Gastrocnemius medialis (tissue), 4 donors: ENCODE measurements at regions of chr17 and their contacts with region 1.

Region 1: GRCh38 chr17:70168977-70169708 is at the start of gene KCNJ2:
- DNase-seq: peak; percentile 84 to 89
- ATAC-seq: peak; percentile 72 to 80
- H3K4me3 ChIP-seq: peak within 1 kb of the TSS; percentile 82 to 90 (median 87)
- H3K27ac ChIP-seq: peak within 1 kb of the TSS; percentile 92 to 97 (median 96)
- H3K4me1 ChIP-seq: peaks cover 40% of the 10 kb centered on the region in 2 donors
- H3K27me3 ChIP-seq: no peaks in the 10 kb centered on the region
- CTCF ChIP-seq: peak in 1 of 5 experiments; percentile 30
- POLR2A ChIP-seq: peak; percentile 99
- total RNA-seq, gene KCNJ2: 7.3 to 18.9 (median 10.6) TPM

Region 2: GRCh38 chr17:69327060-69327831 is 841.9 kb before region 1 on chr17 and contains the start of gene ABCA5:
- in situ Hi-C with region 1: loop called in 1 of 4 experiments (anchors 25 kb)
- intact Hi-C with region 1: no loop called
- DNase-seq: peak; percentile 74 to 91
- ATAC-seq: peak; percentile 86
- H3K4me3 ChIP-seq: peak within 1 kb of the TSS; percentile 79 to 94 (median 90)
- H3K27ac ChIP-seq: peak within 1 kb of the TSS; percentile 91 to 98 (median 97)
- H3K4me1 ChIP-seq: peaks cover 25 to 34% of the 10 kb centered on the region in 2 donors
- H3K27me3 ChIP-seq: no peaks in the 10 kb centered on the region
- CTCF ChIP-seq: peak in 2 of 5 experiments; percentile 3
- POLR2A ChIP-seq: peak; percentile 97 to 99
- total RNA-seq, gene ABCA5: 62.8 to 228 (median 123) TPM

Region 3: DNA sequence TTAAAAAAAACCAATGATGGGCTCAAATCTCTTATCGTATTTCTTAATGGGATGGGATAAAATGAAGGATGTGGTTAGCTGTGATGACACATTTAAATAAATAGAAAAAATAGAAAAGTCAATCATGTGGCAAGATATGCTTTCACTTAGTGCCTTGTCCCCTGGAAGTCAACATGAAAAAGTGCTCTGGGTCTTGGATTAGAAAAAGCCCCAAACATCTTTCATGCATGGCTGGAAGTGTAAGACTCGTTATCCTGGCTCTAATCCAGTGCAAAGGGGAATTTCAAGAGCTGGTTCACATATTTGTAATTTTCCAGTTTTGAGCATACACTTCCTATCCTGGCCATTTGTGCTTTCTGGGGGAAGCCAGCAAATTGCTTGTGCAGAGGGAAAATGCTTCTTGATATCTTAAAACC is 593.8 kb before region 1 on chr17:
- in situ Hi-C with region 1: loop called in 3 of 4 experiments (anchors 25 kb)
- intact Hi-C with region 1: no loop called
- DNase-seq: no peak
- ATAC-seq: peak; percentile 13 to 23
- H3K4me3 ChIP-seq: no peak overlapping the region
- H3K27ac ChIP-seq: peak overlapping the region in 1 of 4 donors; percentile 56
- H3K4me1 ChIP-seq: peaks cover 0 to 12% of the 10 kb centered on the region in 2 donors
- H3K27me3 ChIP-seq: no peaks in the 10 kb centered on the region
- CTCF ChIP-seq: no peak
- POLR2A ChIP-seq: no peak

Region 4: DNA sequence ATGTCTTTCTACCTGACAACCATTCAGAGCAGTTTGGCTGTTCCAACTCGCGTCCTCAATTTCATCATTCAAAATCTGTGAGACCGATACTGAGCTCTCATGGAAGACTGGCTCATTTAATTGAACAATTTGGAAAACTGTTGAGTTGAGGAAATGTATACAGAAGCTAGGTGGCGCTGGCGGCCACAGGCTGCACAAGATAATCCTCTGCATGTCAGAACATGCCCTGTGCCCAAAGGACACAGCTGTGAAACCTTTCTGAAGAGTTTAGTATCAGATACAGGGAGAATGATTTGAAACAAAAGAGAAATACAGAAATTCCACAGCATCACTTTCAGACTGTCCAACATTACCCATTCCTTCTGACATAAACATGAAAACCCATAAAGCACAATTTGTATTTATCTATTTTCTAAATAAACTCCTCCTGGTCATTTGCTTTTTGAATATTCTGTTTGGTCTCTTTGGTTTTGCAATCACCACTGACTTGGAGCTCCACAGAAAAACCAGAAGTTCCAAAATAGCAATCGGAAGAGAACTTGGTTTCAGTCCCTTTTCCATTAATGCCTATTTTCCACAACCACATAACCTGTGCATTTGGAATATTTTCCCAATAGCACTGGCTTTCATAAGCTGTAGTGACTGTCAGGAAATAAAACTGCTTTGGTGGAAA is 561.8 kb before region 1 on chr17:
- in situ Hi-C with region 1: no loop called
- intact Hi-C with region 1: loop called (anchors 2 kb)
- DNase-seq: peak; percentile 55 to 75
- ATAC-seq: peak; percentile 60 to 88
- H3K4me3 ChIP-seq: no peak overlapping the region
- H3K27ac ChIP-seq: peak overlapping the region; percentile 69 to 80 (median 72)
- H3K4me1 ChIP-seq: peaks cover 27 to 35% of the 10 kb centered on the region in 2 donors
- H3K27me3 ChIP-seq: no peaks in the 10 kb centered on the region
- CTCF ChIP-seq: peak; percentile 78 to 94 (median 86)
- POLR2A ChIP-seq: no peak

Region 5: GRCh38 chr17:70137451-70138230 is 31.5 kb before region 1 on chr17:
- in situ Hi-C with region 1: no loop called
- intact Hi-C with region 1: loop called (anchors 1 kb)
- DNase-seq: peak; percentile 89 to 94
- ATAC-seq: peak; percentile 97
- H3K4me3 ChIP-seq: peak overlapping the region; percentile 51 to 59 (median 54)
- H3K27ac ChIP-seq: peak overlapping the region; percentile 91 to 98 (median 93)
- H3K4me1 ChIP-seq: peaks cover 19 to 23% of the 10 kb centered on the region in 2 donors
- H3K27me3 ChIP-seq: no peaks in the 10 kb centered on the region
- CTCF ChIP-seq: no peak
- POLR2A ChIP-seq: peak; percentile 63 to 88

Region 6: GRCh38 chr17:70313057-70313852 is 144.1 kb after region 1 on chr17:
- in situ Hi-C with region 1: no loop called
- intact Hi-C with region 1: loop called (anchors 10 kb)
- DNase-seq: no peak
- ATAC-seq: no peak
- H3K4me3 ChIP-seq: no peak overlapping the region
- H3K27ac ChIP-seq: no peak overlapping the region
- H3K4me1 ChIP-seq: peaks cover 25 to 30% of the 10 kb centered on the region in 2 donors
- H3K27me3 ChIP-seq: no peaks in the 10 kb centered on the region
- CTCF ChIP-seq: no peak
- POLR2A ChIP-seq: no peak